ENCODE measurements at regions of chr4 and their contacts with region 1.

Region 1: DNA sequence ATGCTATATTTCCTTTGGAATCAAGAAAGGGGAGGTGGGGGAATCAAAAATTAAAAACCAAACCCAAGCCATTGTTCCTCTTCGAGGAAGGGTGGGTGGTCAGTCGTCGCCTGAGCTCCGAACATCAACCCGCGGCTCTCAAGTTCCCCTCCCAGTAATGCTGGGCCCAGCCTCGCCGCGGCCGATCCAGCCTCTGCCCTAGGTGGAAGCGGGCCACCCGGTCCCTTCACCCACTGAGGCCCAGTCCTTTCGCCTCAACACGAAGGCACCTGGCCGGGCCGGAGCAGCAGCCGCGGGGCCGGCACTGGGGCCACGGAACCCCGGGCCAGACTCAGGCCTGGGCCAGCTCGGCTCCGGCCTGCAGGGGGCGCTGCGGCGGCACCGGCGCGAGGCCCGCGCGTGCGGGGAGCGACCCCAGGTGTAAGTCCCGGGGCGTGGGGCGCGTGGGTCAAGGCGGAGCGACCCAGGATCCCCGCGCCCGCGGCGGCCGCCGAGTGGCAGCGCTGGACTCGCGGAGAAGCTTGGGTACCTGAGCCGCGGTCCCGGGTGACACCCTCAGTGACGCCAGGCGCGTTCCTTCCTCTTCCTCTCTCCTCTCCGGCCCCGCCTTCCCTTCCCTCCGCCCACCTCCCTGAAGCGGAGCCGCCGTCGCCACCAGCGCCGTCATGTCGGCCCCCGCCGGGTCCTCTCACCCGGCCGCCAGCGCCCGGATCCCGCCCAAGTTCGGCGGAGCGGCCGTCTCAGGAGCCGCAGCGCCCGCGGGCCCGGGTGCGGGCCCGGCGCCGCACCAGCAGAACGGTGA is at the start of gene SEC24B:
- DNase-seq: peak; percentile 94
- ATAC-seq: peak; percentile 95 to 96
- total RNA-seq, gene SEC24B: 25.5 to 28.6 TPM

Region 2: GRCh38 chr4:108902769-108903168 is 530.6 kb before region 1 on chr4:
- intact Hi-C with region 1: no loop called
- DNase-seq: no peak
- ATAC-seq: no peak

Region 3: GRCh38 chr4:109548655-109549054 is 115.2 kb after region 1 on chr4:
- intact Hi-C with region 1: loop called in 1 of 2 experiments (anchors 10 kb)
- DNase-seq: no peak
- ATAC-seq: peak; percentile 27 to 77

Region 4: GRCh38 chr4:109559983-109560686 is 126.7 kb after region 1 on chr4 and contains the start of gene MCUB:
- intact Hi-C with region 1: loop called in 1 of 2 experiments (anchors 10 kb)
- DNase-seq: peak; percentile 93
- ATAC-seq: peak; percentile 98 to 99
- total RNA-seq, gene MCUB: 25.9 to 27.7 TPM

Region 5: GRCh38 chr4:109658871-109659410 is 225.5 kb after region 1 on chr4:
- intact Hi-C with region 1: loop called in 1 of 2 experiments (anchors 5 kb)
- DNase-seq: no peak
- ATAC-seq: no peak

Region 6: DNA sequence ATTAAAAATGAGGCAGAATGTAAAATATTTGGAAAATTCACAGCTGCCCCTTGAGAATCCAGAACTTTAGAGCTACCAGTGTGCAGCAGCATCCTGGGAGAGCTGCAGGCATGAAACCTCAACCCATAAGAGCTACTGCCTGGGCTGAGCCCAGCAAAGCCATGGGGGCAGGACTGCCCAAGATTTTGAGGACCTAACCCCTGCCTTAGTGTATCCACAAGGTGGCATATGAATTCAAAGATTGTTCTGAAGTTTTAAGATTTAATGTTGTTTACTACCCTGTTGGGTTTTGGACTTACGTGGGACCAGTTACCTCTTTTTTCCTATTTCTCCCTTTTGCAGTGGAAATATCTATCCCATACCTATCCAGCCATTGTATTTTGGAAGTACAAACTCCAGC is 243.5 kb after region 1 on chr4:
- intact Hi-C with region 1: no loop called
- DNase-seq: no peak
- ATAC-seq: no peak